PC-3 (cell line): ENCODE measurements at regions of chr18 and their contacts with region 1.

Region 1: GRCh38 chr18:10771053-10771709 is 245.4 kb downstream of the NAPG start:
- DNase-seq: no peak
- ATAC-seq: no peak
- H3K4me3 ChIP-seq: no peak overlapping the region
- H3K27ac ChIP-seq: no peak overlapping the region
- H3K4me1 ChIP-seq: no peaks in the 10 kb centered on the region
- H3K27me3 ChIP-seq: peaks cover 63% of the 10 kb centered on the region
- CTCF ChIP-seq: no peak

Region 2: DNA sequence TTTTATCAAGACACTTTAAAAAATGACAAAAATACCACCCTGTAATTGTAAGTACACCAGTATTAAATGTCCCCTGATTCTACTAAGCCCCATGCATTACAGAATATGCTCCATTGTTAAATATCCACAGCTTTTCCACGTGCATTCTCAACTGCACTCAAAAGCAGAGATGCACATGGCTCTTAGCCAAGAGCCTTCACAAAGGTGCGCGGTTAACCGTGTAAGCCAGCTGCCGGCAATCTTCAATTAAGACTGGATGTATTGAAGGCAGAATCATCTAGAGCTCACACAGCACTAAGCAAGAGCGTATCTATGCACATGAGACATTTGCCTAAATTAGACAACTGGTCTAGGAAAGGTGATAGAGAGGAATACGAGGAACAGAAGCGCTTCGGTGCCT is 32.9 kb after region 1 on chr18:
- CTCF ChIA-PET with region 1: interaction called, 10 read pairs
- POLR2A ChIA-PET with region 1: no interaction called
- intact Hi-C with region 1: no loop called
- DNase-seq: no peak
- ATAC-seq: no peak
- H3K4me3 ChIP-seq: no peak overlapping the region
- H3K27ac ChIP-seq: no peak overlapping the region
- H3K4me1 ChIP-seq: no peaks in the 10 kb centered on the region
- H3K27me3 ChIP-seq: peaks cover 87% of the 10 kb centered on the region
- CTCF ChIP-seq: no peak

Region 3: GRCh38 chr18:10814336-10814735 is 43.2 kb after region 1 on chr18:
- CTCF ChIA-PET with region 1: no interaction called
- POLR2A ChIA-PET with region 1: no interaction called
- intact Hi-C with region 1: no loop called
- DNase-seq: no peak
- ATAC-seq: no peak
- H3K4me3 ChIP-seq: no peak overlapping the region
- H3K27ac ChIP-seq: no peak overlapping the region
- H3K4me1 ChIP-seq: no peaks in the 10 kb centered on the region
- H3K27me3 ChIP-seq: peaks cover 75% of the 10 kb centered on the region
- CTCF ChIP-seq: no peak